A549 (cell line): ENCODE measurements at regions of chr10 and their contacts with region 1.

Region 1: GRCh38 chr10:67697724-67698131 is 1.7 kb upstream of the CTNNA3 start:
- DNase-seq: peak; percentile 58 to 63
- ATAC-seq: peak; percentile 89 to 91; a peak in 5 of 6 replicates
- H3K4me3 ChIP-seq: no peak overlapping the region
- H3K27ac ChIP-seq: no peak overlapping the region
- H3K4me1 ChIP-seq: no peaks in the 10 kb centered on the region
- CTCF ChIP-seq: peak; percentile 72
- EP300 ChIP-seq: no peak
- POLR2A ChIP-seq: no peak
- RAD21 ChIP-seq: peak; percentile 63 to 65

Region 2: DNA sequence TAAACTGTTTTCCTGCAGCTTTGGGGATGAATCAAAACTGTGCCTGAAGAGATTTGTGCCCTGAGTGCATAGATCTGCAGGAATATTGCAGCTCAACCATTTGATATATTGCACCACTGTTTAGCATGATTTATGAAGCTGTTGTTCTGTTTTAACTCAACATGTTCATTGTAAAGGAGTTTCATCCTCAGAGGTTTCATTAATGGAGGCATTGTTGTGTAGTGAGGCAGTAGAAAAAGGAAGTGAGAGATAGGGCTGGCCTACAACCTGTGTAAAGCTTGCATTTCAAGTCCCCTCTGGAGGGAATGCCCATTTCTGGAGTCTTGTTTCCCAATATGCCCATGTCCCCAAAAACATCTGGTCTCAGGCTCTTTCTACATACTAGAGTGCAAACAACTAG is 72.8 kb after region 1 on chr10:
- CTCF ChIA-PET with region 1: interaction called, 10 read pairs
- POLR2A ChIA-PET with region 1: no interaction called
- DNase-seq: no peak
- ATAC-seq: no peak
- H3K4me3 ChIP-seq: no peak overlapping the region
- H3K27ac ChIP-seq: no peak overlapping the region
- H3K4me1 ChIP-seq: no peaks in the 10 kb centered on the region
- CTCF ChIP-seq: no peak
- EP300 ChIP-seq: no peak
- POLR2A ChIP-seq: no peak
- RAD21 ChIP-seq: no peak